GM12878 (cell line): ENCODE measurements at regions of chr10 and their contacts with region 1.

Region 1: DNA sequence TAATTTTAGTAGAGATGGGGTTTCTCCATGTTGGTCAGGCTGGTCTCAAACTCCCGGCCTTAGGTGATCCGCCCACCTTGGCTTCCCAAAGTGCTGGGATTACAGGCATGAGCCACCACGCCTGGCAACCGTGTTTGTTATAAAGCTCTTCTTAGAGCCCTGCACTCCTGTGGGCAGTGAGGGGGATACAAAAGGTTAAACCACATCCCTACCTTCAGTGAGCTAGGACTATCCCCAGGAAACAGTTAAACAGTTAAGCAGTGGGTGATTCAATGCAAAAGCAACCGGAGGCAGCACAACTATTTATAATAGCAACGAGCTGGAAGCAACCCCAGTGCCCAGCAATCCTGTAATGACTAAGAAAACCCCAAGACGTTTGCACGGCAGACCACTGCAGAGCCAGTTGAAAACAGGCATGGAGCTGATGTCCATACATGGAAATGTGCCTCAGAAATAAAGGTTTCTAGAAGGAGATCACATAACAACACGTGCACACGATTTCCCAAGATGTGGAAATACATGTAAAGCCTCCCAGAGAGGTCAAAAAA is 107.2 kb upstream of the LYZL2 start:
- DNase-seq: peak; percentile 94
- ATAC-seq: peak; percentile 85
- H3K4me3 ChIP-seq: no peak overlapping the region
- H3K27ac ChIP-seq: peak overlapping the region; percentile 91
- H3K4me1 ChIP-seq: peaks cover 25% of the 10 kb centered on the region
- H3K27me3 ChIP-seq: no peaks in the 10 kb centered on the region
- CTCF ChIP-seq: no peak
- EP300 ChIP-seq: peak; percentile 88 to 95
- POLR2A ChIP-seq: no peak
- RAD21 ChIP-seq: no peak

Region 2: DNA sequence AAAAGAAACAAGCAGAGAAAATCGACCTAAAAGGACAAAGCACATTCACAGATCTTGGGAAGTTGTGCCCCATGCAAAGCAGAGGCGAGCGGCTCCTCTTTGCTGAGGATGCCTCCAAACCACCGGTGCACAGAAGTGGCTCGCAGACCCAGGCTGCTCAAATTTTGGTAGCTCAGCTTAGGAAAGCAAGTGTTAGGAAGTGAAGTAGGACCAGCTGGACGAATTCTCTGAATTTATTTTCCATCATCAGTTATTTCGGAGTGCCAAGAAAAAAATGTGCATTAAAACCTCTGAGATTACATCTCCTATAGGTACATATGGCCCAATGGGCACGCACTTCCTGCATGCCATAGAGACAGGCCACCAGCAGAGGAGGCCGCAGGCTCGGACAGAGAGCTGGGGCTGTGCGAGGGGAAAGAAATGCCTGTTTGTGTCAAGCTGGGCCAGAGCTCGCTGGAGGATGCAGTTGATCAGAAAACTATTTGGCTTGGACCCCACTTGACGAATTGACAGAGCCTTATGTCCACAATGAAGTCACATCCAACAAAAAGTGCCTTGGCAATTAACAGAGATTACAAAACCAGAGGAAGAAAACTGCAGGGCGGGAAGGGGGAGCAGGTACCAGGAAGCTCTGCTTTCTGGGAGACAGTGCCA is 15.0 kb after region 1 on chr10:
- CTCF ChIA-PET with region 1: interaction called, 4 read pairs
- POLR2A ChIA-PET with region 1: no interaction called
- RAD21 ChIA-PET with region 1: interaction called, 13 read pairs
- SMC1A ChIA-PET with region 1: interaction called, 37 read pairs
- in situ Hi-C with region 1: no loop called
- intact Hi-C with region 1: loop called (anchors 1 kb)
- DNase-seq: peak; percentile 32
- ATAC-seq: peak; percentile 87
- H3K4me3 ChIP-seq: no peak overlapping the region
- H3K27ac ChIP-seq: peak overlapping the region; percentile 71
- H3K4me1 ChIP-seq: peaks cover 32% of the 10 kb centered on the region
- H3K27me3 ChIP-seq: no peaks in the 10 kb centered on the region
- CTCF ChIP-seq: peak; percentile 80 to 87 (median 81)
- EP300 ChIP-seq: no peak
- POLR2A ChIP-seq: no peak
- RAD21 ChIP-seq: peak; percentile 97

Region 3: GRCh38 chr10:30915146-30915545 is 178.4 kb after region 1 on chr10:
- CTCF ChIA-PET with region 1: no interaction called
- POLR2A ChIA-PET with region 1: no interaction called
- RAD21 ChIA-PET with region 1: no interaction called
- SMC1A ChIA-PET with region 1: no interaction called
- in situ Hi-C with region 1: no loop called
- intact Hi-C with region 1: no loop called
- DNase-seq: no peak
- ATAC-seq: no peak
- H3K4me3 ChIP-seq: no peak overlapping the region
- H3K27ac ChIP-seq: no peak overlapping the region
- H3K4me1 ChIP-seq: no peaks in the 10 kb centered on the region
- H3K27me3 ChIP-seq: no peaks in the 10 kb centered on the region
- CTCF ChIP-seq: no peak
- EP300 ChIP-seq: no peak
- POLR2A ChIP-seq: no peak
- RAD21 ChIP-seq: no peak

Region 4: DNA sequence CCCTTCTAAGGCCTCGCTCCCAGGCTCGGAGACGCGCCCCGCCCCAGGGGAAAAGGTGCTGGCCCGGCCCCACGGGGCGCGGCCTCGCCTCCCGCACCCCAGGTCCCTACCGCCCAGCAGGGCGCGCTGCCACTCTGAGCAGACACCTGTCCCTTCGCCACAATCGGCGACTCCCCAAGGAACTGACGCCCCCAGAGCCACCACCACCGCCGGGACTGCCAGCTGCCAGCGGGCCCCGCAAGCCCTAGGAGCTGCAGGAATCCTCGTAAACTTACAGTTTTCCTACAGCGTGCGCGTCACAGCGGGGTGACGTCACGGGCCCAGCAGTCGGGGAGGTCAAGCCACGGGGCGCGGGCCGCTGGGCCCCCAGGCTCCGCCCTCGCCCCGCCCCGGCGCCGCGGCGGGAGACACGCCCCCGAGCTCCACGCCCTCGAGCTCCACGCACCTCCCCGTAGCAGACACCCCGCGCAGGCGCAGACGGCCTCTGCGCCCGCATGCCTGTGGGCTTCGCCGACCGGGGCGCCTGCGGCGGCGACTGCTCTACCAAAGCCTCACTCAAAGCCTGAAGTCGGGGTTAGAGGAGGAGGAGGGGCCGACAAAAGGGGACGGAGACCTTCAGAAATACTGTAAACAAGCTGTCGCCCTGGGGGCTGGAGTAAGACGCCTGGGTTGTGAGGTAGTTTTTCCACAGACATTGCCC is 294.9 kb after region 1 on chr10 and contains the start of gene ZNF438:
- CTCF ChIA-PET with region 1: no interaction called
- POLR2A ChIA-PET with region 1: interaction called, 3 read pairs
- RAD21 ChIA-PET with region 1: interaction called, 3 read pairs
- SMC1A ChIA-PET with region 1: no interaction called
- in situ Hi-C with region 1: no loop called
- intact Hi-C with region 1: loop called (anchors 1 kb)
- DNase-seq: peak; percentile 68
- ATAC-seq: peak; percentile 90
- H3K4me3 ChIP-seq: peak within 1 kb of the TSS; percentile 75
- H3K27ac ChIP-seq: peak within 1 kb of the TSS; percentile 97
- H3K4me1 ChIP-seq: peaks cover 2% of the 10 kb centered on the region; the same call in 1 of the 2 replicates
- H3K27me3 ChIP-seq: no peaks in the 10 kb centered on the region
- CTCF ChIP-seq: peak; percentile 69 to 80 (median 71)
- EP300 ChIP-seq: peak in 1 of 2 experiments; percentile 64; a peak in 1 of 4 replicates
- POLR2A ChIP-seq: peak; percentile 79
- RAD21 ChIP-seq: peak; percentile 39; the same call in 1 of the 2 replicates
- polyA plus RNA-seq, gene ZNF438: 0.93 to 0.99 TPM

Region 5: GRCh38 chr10:31603235-31604087 is 866.7 kb after region 1 on chr10:
- CTCF ChIA-PET with region 1: no interaction called
- POLR2A ChIA-PET with region 1: no interaction called
- RAD21 ChIA-PET with region 1: no interaction called
- SMC1A ChIA-PET with region 1: no interaction called
- in situ Hi-C with region 1: no loop called
- intact Hi-C with region 1: loop called (anchors 10 kb)
- DNase-seq: peak; percentile 66
- ATAC-seq: peak; percentile 99
- H3K4me3 ChIP-seq: peak overlapping the region; percentile 66
- H3K27ac ChIP-seq: no peak overlapping the region
- H3K4me1 ChIP-seq: peaks cover 9% of the 10 kb centered on the region
- H3K27me3 ChIP-seq: no peaks in the 10 kb centered on the region
- CTCF ChIP-seq: no peak
- EP300 ChIP-seq: no peak
- POLR2A ChIP-seq: peak; percentile 71
- RAD21 ChIP-seq: no peak